Mammary epithelial cell (primary cell): ENCODE measurements at regions of chr7 and their contacts with region 1.

Region 1: GRCh38 chr7:105652359-105652993 is 71.2 kb upstream of the EFCAB10 start:
- DNase-seq: peak; percentile 43
- H3K4me3 ChIP-seq: no peak overlapping the region
- H3K27ac ChIP-seq: no peak overlapping the region
- H3K4me1 ChIP-seq: peaks cover 7% of the 10 kb centered on the region
- H3K27me3 ChIP-seq: no peaks in the 10 kb centered on the region
- CTCF ChIP-seq: peak; percentile 82 to 90

Region 2: DNA sequence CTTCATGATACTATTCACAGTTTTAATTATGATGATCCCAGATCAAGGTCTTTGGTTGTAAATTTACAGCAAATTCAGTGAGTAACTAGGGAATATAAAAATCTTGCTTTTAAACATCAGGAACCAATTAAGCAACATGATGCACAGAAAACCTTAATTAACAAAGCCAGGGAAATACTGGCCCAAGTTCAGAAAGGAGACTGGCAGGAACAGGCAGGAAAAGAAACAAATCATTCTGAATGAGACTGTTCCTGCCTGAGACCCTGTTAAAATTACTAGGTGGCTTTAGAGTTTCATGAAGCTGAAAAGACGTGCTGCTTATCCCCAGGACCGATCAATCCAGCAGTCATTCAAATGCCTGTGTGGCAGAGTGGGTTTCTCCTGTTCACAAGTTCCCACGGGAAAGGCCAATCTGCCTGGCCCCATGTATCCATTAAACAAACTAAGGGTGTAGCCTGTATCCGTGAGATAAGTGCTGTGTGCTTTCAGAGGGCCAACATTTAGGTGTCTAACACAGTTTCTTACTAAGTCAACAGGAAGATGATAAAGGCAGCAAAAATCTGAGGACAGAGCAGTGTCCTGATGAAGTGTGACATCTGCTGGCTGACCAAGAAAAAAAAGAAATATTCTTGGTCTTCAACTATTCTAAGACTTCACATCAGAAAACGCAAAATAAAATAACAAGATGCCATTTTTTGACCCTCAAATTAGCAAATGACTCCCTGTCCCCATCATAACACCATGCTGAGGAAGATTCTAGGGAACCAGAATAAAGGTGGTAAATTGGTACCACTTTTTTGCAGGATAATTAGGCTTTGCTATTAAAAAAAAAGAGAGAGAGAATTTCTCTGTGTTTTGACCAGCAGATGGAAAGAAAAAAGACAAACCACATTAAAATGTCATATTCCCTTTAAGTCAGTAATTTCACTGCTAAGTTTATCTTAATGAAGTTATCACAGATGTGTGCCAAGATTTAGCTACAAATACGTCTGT is 164.6 kb before region 1 on chr7:
- CTCF ChIA-PET with region 1: no interaction called
- dilution Hi-C with region 1: no loop called
- in situ Hi-C with region 1: no loop called
- intact Hi-C with region 1: no loop called
- DNase-seq: peak; percentile 41
- H3K4me3 ChIP-seq: no peak overlapping the region
- H3K27ac ChIP-seq: no peak overlapping the region
- H3K4me1 ChIP-seq: peaks cover 6% of the 10 kb centered on the region
- H3K27me3 ChIP-seq: no peaks in the 10 kb centered on the region
- CTCF ChIP-seq: peak; percentile 25 to 58

Region 3: GRCh38 chr7:105664816-105665525 is 12.5 kb after region 1 on chr7:
- CTCF ChIA-PET with region 1: no interaction called
- dilution Hi-C with region 1: no loop called
- in situ Hi-C with region 1: no loop called
- intact Hi-C with region 1: no loop called
- DNase-seq: no peak
- H3K4me3 ChIP-seq: no peak overlapping the region
- H3K27ac ChIP-seq: no peak overlapping the region
- H3K4me1 ChIP-seq: no peaks in the 10 kb centered on the region
- H3K27me3 ChIP-seq: no peaks in the 10 kb centered on the region
- CTCF ChIP-seq: no peak

Region 4: GRCh38 chr7:105700793-105701192 is 48.3 kb after region 1 on chr7:
- CTCF ChIA-PET with region 1: interaction called, 29 read pairs
- dilution Hi-C with region 1: no loop called
- in situ Hi-C with region 1: no loop called
- intact Hi-C with region 1: no loop called
- DNase-seq: no peak
- H3K4me3 ChIP-seq: no peak overlapping the region
- H3K27ac ChIP-seq: no peak overlapping the region
- H3K4me1 ChIP-seq: no peaks in the 10 kb centered on the region
- H3K27me3 ChIP-seq: no peaks in the 10 kb centered on the region
- CTCF ChIP-seq: no peak

Region 5: GRCh38 chr7:105830391-105831301 is 178.2 kb after region 1 on chr7:
- CTCF ChIA-PET with region 1: interaction called, 10 read pairs
- dilution Hi-C with region 1: no loop called
- in situ Hi-C with region 1: no loop called
- intact Hi-C with region 1: no loop called
- DNase-seq: peak; percentile 83
- H3K4me3 ChIP-seq: no peak overlapping the region
- H3K27ac ChIP-seq: no peak overlapping the region
- H3K4me1 ChIP-seq: peaks cover 15% of the 10 kb centered on the region
- H3K27me3 ChIP-seq: no peaks in the 10 kb centered on the region
- CTCF ChIP-seq: no peak

Region 6: GRCh38 chr7:106009403-106010226 is 357.1 kb after region 1 on chr7:
- CTCF ChIA-PET with region 1: no interaction called
- dilution Hi-C with region 1: no loop called
- in situ Hi-C with region 1: no loop called
- intact Hi-C with region 1: loop called (anchors 1 kb)
- DNase-seq: peak; percentile 88
- H3K4me3 ChIP-seq: no peak overlapping the region
- H3K27ac ChIP-seq: no peak overlapping the region
- H3K4me1 ChIP-seq: peaks cover 8% of the 10 kb centered on the region
- H3K27me3 ChIP-seq: no peaks in the 10 kb centered on the region
- CTCF ChIP-seq: peak; percentile 74 to 96

Region 7: GRCh38 chr7:106166655-106167342 is 514.3 kb after region 1 on chr7:
- CTCF ChIA-PET with region 1: no interaction called
- dilution Hi-C with region 1: loop called (anchors 25 kb)
- in situ Hi-C with region 1: no loop called
- intact Hi-C with region 1: loop called (anchors 1 kb)
- DNase-seq: peak; percentile 40
- H3K4me3 ChIP-seq: no peak overlapping the region
- H3K27ac ChIP-seq: no peak overlapping the region
- H3K4me1 ChIP-seq: no peaks in the 10 kb centered on the region
- H3K27me3 ChIP-seq: no peaks in the 10 kb centered on the region
- CTCF ChIP-seq: peak; percentile 76 to 82

Region 8: GRCh38 chr7:106720641-106721040 is 1068.2 kb after region 1 on chr7:
- CTCF ChIA-PET with region 1: no interaction called
- dilution Hi-C with region 1: no loop called
- in situ Hi-C with region 1: no loop called
- intact Hi-C with region 1: no loop called
- DNase-seq: no peak
- H3K4me3 ChIP-seq: no peak overlapping the region
- H3K27ac ChIP-seq: no peak overlapping the region
- H3K4me1 ChIP-seq: peaks cover 23% of the 10 kb centered on the region
- H3K27me3 ChIP-seq: no peaks in the 10 kb centered on the region
- CTCF ChIP-seq: no peak